ENCODE measurements at regions of chr6 and their contacts with region 1.

Region 1: DNA sequence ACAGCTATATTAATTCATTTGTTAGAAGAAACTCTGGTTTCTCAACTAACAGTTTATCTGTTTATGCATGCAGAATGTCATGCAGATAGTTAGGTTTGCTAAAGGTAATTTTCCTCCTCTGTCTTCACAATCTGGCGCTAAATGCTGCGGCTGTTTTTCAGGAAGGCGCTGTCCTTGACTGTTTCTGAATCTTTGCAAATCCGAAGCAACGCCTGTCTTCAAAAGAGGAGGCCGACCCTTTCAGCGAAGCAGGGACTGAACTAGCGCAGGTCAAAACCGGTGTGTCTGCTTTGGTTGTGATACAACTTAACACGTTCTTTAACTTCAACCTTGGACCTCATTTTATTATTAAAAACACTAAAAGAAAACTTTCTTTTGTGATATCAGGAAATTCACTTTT is 737.2 kb downstream of the QKI start:
- DNase-seq: no peak
- H3K4me3 Mint-ChIP-seq: no peak overlapping the region
- H3K27ac Mint-ChIP-seq: no peak overlapping the region
- H3K4me1 Mint-ChIP-seq: no peaks in the 10 kb centered on the region
- H3K27me3 Mint-ChIP-seq: peaks cover 2% of the 10 kb centered on the region
- CTCF ChIP-seq: no peak

Region 2: DNA sequence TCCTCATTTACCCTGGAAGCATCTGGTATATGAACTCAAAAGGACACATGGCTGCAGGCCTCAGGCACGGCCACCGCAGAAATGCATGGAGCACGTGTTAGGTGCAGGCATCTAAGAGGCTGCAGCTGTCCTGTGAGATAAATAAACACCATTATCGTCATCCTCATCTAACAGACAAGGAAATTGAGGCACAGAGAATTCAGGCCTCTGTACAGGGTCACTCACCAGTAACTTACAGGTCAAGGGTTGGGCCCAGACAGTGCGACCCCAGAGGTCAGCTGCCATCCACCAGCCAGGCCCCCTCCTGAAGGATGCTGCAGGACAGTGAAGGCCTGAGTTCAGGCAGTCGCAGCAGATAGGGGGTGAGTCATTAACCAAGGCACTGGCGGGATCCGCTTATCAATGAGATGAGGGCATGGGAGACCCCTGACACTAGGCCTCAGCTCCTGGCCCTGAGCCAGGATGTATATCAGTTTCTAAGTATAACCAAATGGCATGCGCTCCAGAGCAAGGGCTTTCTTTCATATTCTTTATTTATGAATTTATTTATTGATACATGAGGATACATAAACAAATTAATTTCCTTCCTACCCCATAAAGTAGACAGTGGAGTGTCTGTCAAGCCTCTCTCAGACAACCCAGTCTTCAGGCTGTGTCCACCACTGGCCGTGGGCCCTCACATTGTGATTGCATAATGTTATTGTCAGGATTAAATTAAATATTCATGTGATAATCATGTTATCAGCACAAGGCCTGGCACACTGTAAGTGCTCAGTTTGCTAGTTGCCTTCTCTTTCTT is 420.4 kb before region 1 on chr6:
- CTCF ChIA-PET with region 1: no interaction called
- intact Hi-C with region 1: no loop called
- DNase-seq: no peak
- H3K4me3 Mint-ChIP-seq: no peak overlapping the region
- H3K27ac Mint-ChIP-seq: no peak overlapping the region
- H3K4me1 Mint-ChIP-seq: no peaks in the 10 kb centered on the region
- H3K27me3 Mint-ChIP-seq: peaks cover 7% of the 10 kb centered on the region
- CTCF ChIP-seq: no peak

Region 3: DNA sequence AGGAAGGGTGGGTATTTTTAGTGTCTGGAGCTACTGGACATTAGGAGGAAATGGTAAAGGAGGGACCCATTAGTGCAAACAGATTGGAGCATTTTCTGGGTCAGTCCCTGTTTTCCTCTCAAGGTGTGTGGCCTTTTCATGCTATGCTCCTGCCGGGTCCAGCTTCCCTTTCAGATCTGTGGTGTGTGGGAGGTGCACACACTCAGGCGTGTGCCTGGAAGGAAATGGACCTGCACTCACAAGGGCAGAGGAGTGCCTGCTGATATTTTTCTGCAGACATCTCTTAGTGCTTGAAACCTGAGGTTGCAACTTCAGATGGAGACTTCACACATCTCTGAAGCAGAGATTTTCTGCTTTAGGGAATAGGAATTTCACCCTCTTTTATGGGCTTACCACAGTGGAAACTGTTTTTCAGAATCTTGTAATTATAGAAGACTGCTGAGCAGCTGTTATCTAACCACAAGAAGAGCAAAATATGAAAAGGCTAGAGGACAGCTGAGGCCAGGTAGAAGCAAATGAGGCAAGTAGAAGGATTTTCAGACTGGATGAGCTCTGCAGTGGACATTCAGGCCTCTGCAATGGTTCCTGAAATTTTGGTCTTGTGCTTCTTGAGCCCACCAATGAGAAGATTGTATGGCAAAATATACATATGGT is 27.0 kb after region 1 on chr6:
- CTCF ChIA-PET with region 1: no interaction called
- intact Hi-C with region 1: no loop called
- DNase-seq: no peak
- H3K4me3 Mint-ChIP-seq: no peak overlapping the region
- H3K27ac Mint-ChIP-seq: no peak overlapping the region
- H3K4me1 Mint-ChIP-seq: no peaks in the 10 kb centered on the region
- H3K27me3 Mint-ChIP-seq: no peaks in the 10 kb centered on the region
- CTCF ChIP-seq: no peak

Region 4: GRCh38 chr6:164258421-164258820 is 106.7 kb after region 1 on chr6:
- CTCF ChIA-PET with region 1: no interaction called
- intact Hi-C with region 1: no loop called
- DNase-seq: no peak
- H3K4me3 Mint-ChIP-seq: no peak overlapping the region
- H3K27ac Mint-ChIP-seq: no peak overlapping the region
- H3K4me1 Mint-ChIP-seq: no peaks in the 10 kb centered on the region
- H3K27me3 Mint-ChIP-seq: no peaks in the 10 kb centered on the region
- CTCF ChIP-seq: no peak

Region 5: GRCh38 chr6:164579035-164579434 is 427.3 kb after region 1 on chr6:
- CTCF ChIA-PET with region 1: interaction called, 11 read pairs
- intact Hi-C with region 1: no loop called
- DNase-seq: no peak
- H3K4me3 Mint-ChIP-seq: no peak overlapping the region
- H3K27ac Mint-ChIP-seq: no peak overlapping the region
- H3K4me1 Mint-ChIP-seq: no peaks in the 10 kb centered on the region
- H3K27me3 Mint-ChIP-seq: no peaks in the 10 kb centered on the region
- CTCF ChIP-seq: no peak

Measured in Calu3 (cell line).